Mammary epithelial cell (primary cell): ENCODE measurements at regions of chr1 and their contacts with region 1.

Region 1: GRCh38 chr1:204975570-204976235 is 67.3 kb upstream of the CNTN2 start:
- DNase-seq: peak; percentile 7
- H3K4me3 ChIP-seq: no peak overlapping the region
- H3K27ac ChIP-seq: no peak overlapping the region
- H3K4me1 ChIP-seq: peaks cover 6% of the 10 kb centered on the region
- H3K27me3 ChIP-seq: no peaks in the 10 kb centered on the region
- CTCF ChIP-seq: peak; percentile 73 to 85

Region 2: DNA sequence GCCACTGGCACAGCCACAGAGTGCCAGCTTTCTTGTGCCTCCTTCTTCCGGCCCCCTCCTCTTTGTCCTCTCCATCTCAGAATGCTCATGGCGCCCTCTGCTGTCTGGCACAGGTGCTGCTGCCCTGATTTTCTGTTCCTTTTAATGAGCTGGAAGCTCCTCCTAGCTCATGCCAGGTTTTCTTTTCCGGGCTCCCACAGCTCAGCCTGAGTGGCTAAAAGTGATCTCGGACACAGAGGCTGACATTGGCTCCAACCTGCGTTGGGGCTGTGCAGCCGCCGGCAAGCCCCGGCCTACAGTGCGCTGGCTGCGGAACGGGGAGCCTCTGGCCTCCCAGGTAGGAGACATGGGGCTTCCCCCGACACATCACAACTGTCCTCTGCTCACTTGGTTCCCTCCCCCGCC is 86.0 kb after region 1 on chr1:
- CTCF ChIA-PET with region 1: interaction called, 4 read pairs
- dilution Hi-C with region 1: no loop called
- in situ Hi-C with region 1: loop called in 1 of 2 experiments (anchors 10 kb)
- intact Hi-C with region 1: loop called (anchors 1 kb)
- DNase-seq: peak; percentile 48
- H3K4me3 ChIP-seq: no peak overlapping the region
- H3K27ac ChIP-seq: no peak overlapping the region
- H3K4me1 ChIP-seq: no peaks in the 10 kb centered on the region
- H3K27me3 ChIP-seq: no peaks in the 10 kb centered on the region
- CTCF ChIP-seq: peak; percentile 92 to 93